A673 (cell line): ENCODE measurements at regions of chr12 and their contacts with region 1.

Region 1: GRCh38 chr12:81257947-81258551 is 180.2 kb downstream of the ACSS3 start:
- DNase-seq: peak; percentile 84
- H3K4me3 ChIP-seq: no peak overlapping the region
- H3K27ac ChIP-seq: no peak overlapping the region
- H3K4me1 ChIP-seq: peaks cover 32% of the 10 kb centered on the region
- H3K27me3 ChIP-seq: no peaks in the 10 kb centered on the region
- CTCF ChIP-seq: peak; percentile 78

Region 2: DNA sequence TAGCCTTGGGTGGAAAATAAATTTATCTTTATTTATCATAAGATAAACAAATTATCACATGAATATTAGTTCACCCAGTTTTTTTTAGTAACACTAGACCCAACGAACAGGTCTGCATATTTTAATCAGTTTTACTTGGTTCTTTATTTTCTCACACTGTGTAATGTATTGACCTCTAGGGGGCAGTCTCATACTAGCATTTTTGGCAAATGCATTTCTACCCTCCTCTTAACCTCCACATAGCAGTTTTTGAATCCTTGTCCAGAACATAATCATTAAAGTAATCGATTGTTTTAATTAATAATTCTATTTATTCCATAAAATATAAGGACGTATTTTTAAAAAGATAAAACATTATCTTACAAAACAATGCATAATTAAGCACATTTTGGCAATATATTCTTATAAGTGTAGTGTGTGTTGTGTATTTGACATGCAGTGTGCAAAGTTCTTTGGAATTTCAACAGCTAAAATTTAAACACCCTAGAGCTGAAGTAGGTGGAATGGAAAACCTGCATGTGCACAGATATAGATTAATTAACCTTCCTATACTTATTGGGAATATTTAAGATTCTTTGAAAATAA is 845.6 kb before region 1 on chr12:
- CTCF ChIA-PET with region 1: no interaction called
- POLR2A ChIA-PET with region 1: no interaction called
- intact Hi-C with region 1: loop called (anchors 2 kb)
- DNase-seq: peak; percentile 81
- H3K4me3 ChIP-seq: no peak overlapping the region
- H3K27ac ChIP-seq: no peak overlapping the region
- H3K4me1 ChIP-seq: peaks cover 4% of the 10 kb centered on the region
- H3K27me3 ChIP-seq: no peaks in the 10 kb centered on the region
- CTCF ChIP-seq: peak; percentile 79

Region 3: DNA sequence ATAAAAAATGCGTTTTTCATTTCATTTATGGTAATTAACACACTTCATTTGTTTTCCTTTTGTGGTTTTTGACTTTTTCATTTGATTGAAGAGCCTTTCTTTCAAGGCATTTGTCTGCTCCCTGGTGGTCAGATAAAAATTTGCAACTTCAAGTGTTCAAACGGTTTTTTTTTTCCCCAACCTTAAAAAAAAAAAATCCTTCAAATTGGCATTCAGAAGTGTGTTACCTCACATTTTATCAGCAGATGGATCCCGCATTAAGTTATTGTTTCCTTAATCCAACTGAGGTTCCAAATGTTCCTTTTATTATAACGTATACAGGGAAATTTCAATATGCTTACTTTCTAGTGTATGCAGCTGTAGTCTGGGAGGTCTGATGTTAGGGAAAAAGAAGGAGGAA is 494.2 kb before region 1 on chr12:
- CTCF ChIA-PET with region 1: no interaction called
- POLR2A ChIA-PET with region 1: no interaction called
- intact Hi-C with region 1: loop called (anchors 2 kb)
- DNase-seq: peak; percentile 74
- H3K4me3 ChIP-seq: no peak overlapping the region
- H3K27ac ChIP-seq: no peak overlapping the region
- H3K4me1 ChIP-seq: peaks cover 7% of the 10 kb centered on the region
- H3K27me3 ChIP-seq: no peaks in the 10 kb centered on the region
- CTCF ChIP-seq: peak; percentile 77

Region 4: GRCh38 chr12:80946594-80946993 is 311.5 kb before region 1 on chr12:
- CTCF ChIA-PET with region 1: no interaction called
- POLR2A ChIA-PET with region 1: no interaction called
- intact Hi-C with region 1: loop called (anchors 10 kb)
- DNase-seq: peak; percentile 38
- H3K4me3 ChIP-seq: no peak overlapping the region
- H3K27ac ChIP-seq: no peak overlapping the region
- H3K4me1 ChIP-seq: peaks cover 7% of the 10 kb centered on the region
- H3K27me3 ChIP-seq: no peaks in the 10 kb centered on the region
- CTCF ChIP-seq: peak; percentile 55